Activated T-helper 1 cell treated with anti-CD3 and anti-CD28 coated beads, Interleukin-12 subunit alpha, Interleukin-12 subunit beta, Interleukin-2, Interleukin-4 antibody, amounts not matched to agents 30 ng/mL and 10 ng/mL and 1 ng/mL, durations not matched to agents 14 hours and 24 hours and 36 hours (primary cell): ENCODE measurements at regions of chr13 and their contacts with region 1.

Region 1: GRCh38 chr13:76886292-76887075 is at the start of gene KCTD12:
- DNase-seq: peak; percentile 60
- H3K4me3 Mint-ChIP-seq: peak within 1 kb of the TSS; percentile 90
- H3K27ac Mint-ChIP-seq: peak within 1 kb of the TSS; percentile 85
- H3K4me1 Mint-ChIP-seq: peaks cover 28% of the 10 kb centered on the region
- H3K27me3 Mint-ChIP-seq: peaks cover 28% of the 10 kb centered on the region
- total RNA-seq, gene KCTD12: 10.4 and 10.7 TPM in 2 replicates

Region 2: GRCh38 chr13:76828316-76828741 is 58.2 kb before region 1 on chr13:
- intact Hi-C with region 1: loop called (anchors 2 kb)
- DNase-seq: no peak
- H3K4me3 Mint-ChIP-seq: no peak overlapping the region
- H3K27ac Mint-ChIP-seq: no peak overlapping the region
- H3K4me1 Mint-ChIP-seq: peaks cover 4% of the 10 kb centered on the region
- H3K27me3 Mint-ChIP-seq: peaks cover 2% of the 10 kb centered on the region

Region 3: GRCh38 chr13:76944456-76944855 is 58.0 kb after region 1 on chr13:
- intact Hi-C with region 1: no loop called
- DNase-seq: no peak
- H3K4me3 Mint-ChIP-seq: no peak overlapping the region
- H3K27ac Mint-ChIP-seq: no peak overlapping the region
- H3K4me1 Mint-ChIP-seq: no peaks in the 10 kb centered on the region
- H3K27me3 Mint-ChIP-seq: peaks cover 2% of the 10 kb centered on the region

Region 4: DNA sequence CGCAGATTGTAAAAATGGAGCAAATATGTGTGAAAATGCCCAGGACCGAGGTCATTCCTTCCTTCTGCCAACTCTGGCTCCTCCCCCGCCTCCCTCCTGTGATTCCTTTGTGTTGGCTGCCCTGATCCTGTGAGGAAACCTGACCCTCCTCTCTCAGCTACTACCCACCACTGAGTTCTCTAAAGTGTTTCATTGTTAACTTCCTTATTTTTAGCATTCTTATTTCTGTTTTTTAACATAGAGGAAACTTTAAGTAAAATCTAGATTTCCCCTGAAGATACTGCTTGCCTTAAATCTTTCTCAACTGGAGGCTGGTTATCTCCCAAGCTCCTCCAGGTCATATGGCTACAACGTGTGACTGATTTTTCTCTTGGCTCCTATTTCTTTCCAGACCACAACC is 162.2 kb after region 1 on chr13:
- intact Hi-C with region 1: no loop called
- DNase-seq: no peak
- H3K4me3 Mint-ChIP-seq: no peak overlapping the region
- H3K27ac Mint-ChIP-seq: peak overlapping the region; percentile 1
- H3K4me1 Mint-ChIP-seq: no peaks in the 10 kb centered on the region
- H3K27me3 Mint-ChIP-seq: no peaks in the 10 kb centered on the region

Region 5: GRCh38 chr13:77105051-77105450 is 218.6 kb after region 1 on chr13:
- intact Hi-C with region 1: no loop called
- DNase-seq: no peak
- H3K4me3 Mint-ChIP-seq: no peak overlapping the region
- H3K27ac Mint-ChIP-seq: no peak overlapping the region
- H3K4me1 Mint-ChIP-seq: no peaks in the 10 kb centered on the region
- H3K27me3 Mint-ChIP-seq: no peaks in the 10 kb centered on the region

Region 6: GRCh38 chr13:77310579-77311279 is 424.2 kb after region 1 on chr13:
- intact Hi-C with region 1: loop called (anchors 10 kb)
- DNase-seq: no peak
- H3K4me3 Mint-ChIP-seq: no peak overlapping the region
- H3K27ac Mint-ChIP-seq: no peak overlapping the region
- H3K4me1 Mint-ChIP-seq: peaks cover 82% of the 10 kb centered on the region
- H3K27me3 Mint-ChIP-seq: no peaks in the 10 kb centered on the region